Calu3 (cell line): ENCODE measurements at regions of chr1 and their contacts with region 1.

Region 1: DNA sequence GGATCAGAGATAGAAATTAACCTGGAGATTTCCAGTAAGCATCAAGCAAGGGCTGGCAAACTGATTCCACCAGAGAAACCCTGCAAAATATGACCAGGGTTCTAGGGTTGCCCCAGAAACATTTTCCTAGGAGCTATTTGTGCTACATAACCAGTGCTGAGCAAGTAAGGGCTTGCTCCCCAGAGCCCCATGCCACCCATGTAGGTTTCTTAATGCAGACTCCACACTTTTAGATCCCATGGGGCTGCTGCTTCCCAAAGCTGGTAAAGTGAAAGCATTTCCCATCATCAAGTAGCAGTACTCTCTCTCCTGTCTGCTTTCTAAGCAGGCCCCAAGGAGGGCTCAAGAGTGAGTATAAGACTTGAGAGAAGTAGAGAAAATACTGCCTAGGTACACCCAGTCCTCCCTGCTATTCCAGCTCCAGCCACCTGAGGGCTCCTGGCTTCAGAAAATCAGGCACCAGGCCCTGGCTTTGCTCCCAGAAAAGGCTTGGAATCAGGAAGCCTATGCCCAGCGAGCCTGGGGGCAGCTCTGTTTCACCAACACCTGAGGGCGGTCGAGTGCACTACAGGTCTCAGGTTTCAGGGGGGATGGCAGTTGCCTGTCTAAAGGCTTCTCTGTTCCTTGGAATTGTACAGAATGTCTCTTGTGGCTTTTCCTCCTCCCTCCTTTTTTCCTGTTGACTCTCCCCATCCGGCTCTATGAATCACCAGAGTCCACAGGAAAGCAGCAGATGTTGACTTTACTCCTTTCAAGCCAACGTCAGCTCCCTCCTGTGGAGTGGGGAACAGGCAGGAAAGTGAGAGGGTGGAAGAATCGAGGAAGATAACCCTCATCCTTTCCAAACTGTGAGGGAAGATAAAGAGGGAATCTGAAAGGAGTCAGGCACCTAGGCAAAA is 6.2 kb upstream of the ANKRD35 start:
- DNase-seq: peak; percentile 98
- H3K4me3 Mint-ChIP-seq: peak overlapping the region; percentile 31
- H3K27ac Mint-ChIP-seq: peak overlapping the region; percentile 71
- H3K4me1 Mint-ChIP-seq: peaks cover 66% of the 10 kb centered on the region
- H3K27me3 Mint-ChIP-seq: no peaks in the 10 kb centered on the region
- CTCF ChIP-seq: peak; percentile 96

Region 2: DNA sequence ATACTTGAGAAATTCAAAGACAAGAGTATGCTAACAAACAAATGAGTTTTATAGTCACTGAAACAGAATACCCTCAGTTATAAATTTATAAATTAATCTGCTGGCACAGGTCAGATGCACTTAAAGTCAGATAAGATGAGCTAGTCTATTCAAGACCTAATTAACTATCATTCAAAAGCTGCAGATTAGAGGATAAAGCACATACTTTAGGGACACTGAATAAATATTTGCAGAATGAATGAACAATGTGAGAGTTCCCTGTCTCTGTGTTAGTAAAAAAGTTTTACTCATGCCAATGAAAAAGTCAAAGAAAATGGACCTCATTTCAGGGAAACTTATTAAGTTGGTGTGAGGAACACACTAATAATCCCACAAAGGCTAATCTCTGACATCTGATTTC is 126.3 kb before region 1 on chr1:
- CTCF ChIA-PET with region 1: no interaction called
- intact Hi-C with region 1: no loop called
- DNase-seq: no peak
- H3K4me3 Mint-ChIP-seq: no peak overlapping the region
- H3K27ac Mint-ChIP-seq: no peak overlapping the region
- H3K4me1 Mint-ChIP-seq: no peaks in the 10 kb centered on the region
- H3K27me3 Mint-ChIP-seq: no peaks in the 10 kb centered on the region
- CTCF ChIP-seq: no peak

Region 3: DNA sequence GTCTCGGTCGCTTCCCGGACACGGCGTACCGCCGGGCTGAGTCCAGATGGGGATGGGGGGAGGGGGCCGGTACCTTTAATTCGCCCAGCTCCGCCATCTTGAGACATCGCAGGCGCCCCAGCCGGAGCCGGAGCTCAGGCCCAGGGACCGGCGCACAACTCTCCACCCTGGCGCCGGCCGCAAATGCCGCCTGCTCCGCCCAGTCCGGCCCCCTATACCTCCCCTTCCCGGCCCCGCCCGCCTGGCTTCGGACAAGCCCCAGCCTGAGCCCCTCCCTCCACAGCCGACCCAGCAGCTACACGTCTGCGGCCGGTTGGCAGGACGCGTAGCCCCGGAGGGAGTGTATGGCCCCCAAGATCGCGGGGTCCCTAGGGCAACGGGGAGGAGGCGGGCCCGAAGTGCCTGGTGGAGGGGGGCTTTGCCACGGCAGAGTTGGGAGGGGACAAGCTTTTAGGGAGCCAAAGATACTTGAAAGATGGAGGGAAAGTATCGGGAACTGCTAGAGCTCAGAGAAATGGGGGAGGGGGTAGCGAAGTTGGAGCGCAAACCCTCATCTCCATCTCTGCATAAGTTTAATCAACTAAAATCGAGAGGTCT is 32.8 kb before region 1 on chr1 and contains the start of gene PIAS3:
- CTCF ChIA-PET with region 1: interaction called, 77 read pairs
- intact Hi-C with region 1: loop called (anchors 2 kb)
- DNase-seq: peak; percentile 98
- H3K4me3 Mint-ChIP-seq: peak within 1 kb of the TSS; percentile 98
- H3K27ac Mint-ChIP-seq: peak within 1 kb of the TSS; percentile 84
- H3K4me1 Mint-ChIP-seq: peaks cover 9% of the 10 kb centered on the region
- H3K27me3 Mint-ChIP-seq: peaks cover 10% of the 10 kb centered on the region
- CTCF ChIP-seq: no peak
- total RNA-seq, gene PIAS3: 38.3 and 40.1 TPM in 2 replicates

Region 4: DNA sequence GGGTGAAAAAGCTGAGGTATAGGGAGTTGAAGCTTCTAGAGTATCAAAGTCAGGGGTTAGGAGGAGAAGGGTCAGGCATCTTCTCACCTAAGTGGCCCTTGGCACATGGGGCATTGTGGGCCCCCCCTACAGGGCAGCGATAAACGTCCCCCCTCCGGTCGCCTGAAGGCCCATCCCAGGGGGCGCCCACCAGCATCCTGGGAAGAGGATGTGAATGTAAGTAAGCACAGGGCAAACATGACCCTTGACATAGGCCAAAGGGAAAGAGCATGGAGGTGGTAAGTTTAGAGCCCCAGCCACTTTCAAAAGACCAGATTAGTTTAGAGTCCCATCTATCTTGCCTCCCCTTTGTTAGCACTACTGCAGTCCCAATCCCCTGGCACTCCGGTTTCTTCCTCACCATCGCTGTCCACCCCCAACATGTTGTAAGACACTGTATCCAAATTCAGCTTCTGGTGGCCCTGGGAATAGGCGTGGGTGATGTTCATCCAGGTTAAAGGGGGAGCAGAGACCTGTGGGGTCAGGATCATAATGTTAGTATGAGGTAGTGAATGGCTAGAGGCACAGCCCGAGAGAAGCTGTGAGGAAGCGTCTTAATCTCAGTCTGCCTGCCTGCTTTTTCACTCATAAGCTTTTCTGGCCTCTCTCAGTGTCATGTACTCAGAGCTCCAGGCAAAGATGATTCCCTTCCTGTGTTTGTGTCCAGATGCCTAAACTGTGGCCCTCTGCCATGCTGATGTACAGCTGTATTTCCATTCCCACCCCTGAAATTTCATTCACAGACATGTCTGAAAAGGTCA is 15.3 kb after region 1 on chr1:
- CTCF ChIA-PET with region 1: interaction called, 53 read pairs
- intact Hi-C with region 1: loop called (anchors 1 kb)
- DNase-seq: no peak
- H3K4me3 Mint-ChIP-seq: no peak overlapping the region
- H3K27ac Mint-ChIP-seq: no peak overlapping the region
- H3K4me1 Mint-ChIP-seq: no peaks in the 10 kb centered on the region
- H3K27me3 Mint-ChIP-seq: no peaks in the 10 kb centered on the region
- CTCF ChIP-seq: no peak

Region 5: GRCh38 chr1:145927063-145927886 is 35.4 kb after region 1 on chr1 and contains the start of gene RBM8A:
- CTCF ChIA-PET with region 1: interaction called, 17 read pairs
- intact Hi-C with region 1: loop called (anchors 5 kb)
- DNase-seq: peak; percentile 95
- H3K4me3 Mint-ChIP-seq: no peak within 1 kb of the TSS
- H3K27ac Mint-ChIP-seq: no peak within 1 kb of the TSS
- H3K4me1 Mint-ChIP-seq: peaks cover 16% of the 10 kb centered on the region
- H3K27me3 Mint-ChIP-seq: no peaks in the 10 kb centered on the region
- CTCF ChIP-seq: peak; percentile 82
- total RNA-seq, gene RBM8A: 167 and 177 TPM in 2 replicates

Region 6: DNA sequence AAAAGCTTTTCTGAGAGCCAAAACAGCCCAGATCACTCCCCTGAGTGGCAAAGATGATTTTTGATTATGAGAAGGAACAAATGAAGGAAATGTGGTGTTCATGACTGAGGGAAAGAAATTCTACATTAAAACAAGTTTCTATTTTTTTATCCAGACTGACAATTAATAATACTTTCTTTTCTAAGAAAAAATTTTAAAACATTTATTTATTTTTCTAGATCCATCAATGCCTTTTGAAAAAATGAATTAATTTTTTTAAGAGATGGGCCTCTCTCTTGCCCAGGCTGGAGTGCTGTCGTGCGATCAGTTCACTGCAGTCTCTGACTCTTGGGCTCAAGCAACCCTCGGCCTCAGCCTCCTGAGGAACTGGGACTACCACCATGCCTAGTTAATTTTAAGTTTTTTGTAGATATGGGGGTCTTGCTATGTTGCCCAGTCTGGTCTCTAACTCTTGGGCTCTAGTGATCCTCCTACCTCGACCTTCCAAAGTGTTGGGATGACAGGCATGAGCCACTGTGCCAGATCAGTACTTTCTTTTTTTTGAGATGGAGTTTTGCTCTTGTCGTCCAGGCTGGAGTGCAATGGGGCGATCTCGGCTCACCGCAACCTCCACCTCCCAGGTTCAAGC is 115.8 kb after region 1 on chr1:
- CTCF ChIA-PET with region 1: interaction called, 6 read pairs
- intact Hi-C with region 1: loop called (anchors 2 kb)
- DNase-seq: no peak
- H3K4me3 Mint-ChIP-seq: no peak overlapping the region
- H3K27ac Mint-ChIP-seq: no peak overlapping the region
- H3K4me1 Mint-ChIP-seq: no peaks in the 10 kb centered on the region
- H3K27me3 Mint-ChIP-seq: no peaks in the 10 kb centered on the region
- CTCF ChIP-seq: no peak